AG04450 (cell line): ENCODE measurements at regions of chr5 and their contacts with region 1.

Region 1: DNA sequence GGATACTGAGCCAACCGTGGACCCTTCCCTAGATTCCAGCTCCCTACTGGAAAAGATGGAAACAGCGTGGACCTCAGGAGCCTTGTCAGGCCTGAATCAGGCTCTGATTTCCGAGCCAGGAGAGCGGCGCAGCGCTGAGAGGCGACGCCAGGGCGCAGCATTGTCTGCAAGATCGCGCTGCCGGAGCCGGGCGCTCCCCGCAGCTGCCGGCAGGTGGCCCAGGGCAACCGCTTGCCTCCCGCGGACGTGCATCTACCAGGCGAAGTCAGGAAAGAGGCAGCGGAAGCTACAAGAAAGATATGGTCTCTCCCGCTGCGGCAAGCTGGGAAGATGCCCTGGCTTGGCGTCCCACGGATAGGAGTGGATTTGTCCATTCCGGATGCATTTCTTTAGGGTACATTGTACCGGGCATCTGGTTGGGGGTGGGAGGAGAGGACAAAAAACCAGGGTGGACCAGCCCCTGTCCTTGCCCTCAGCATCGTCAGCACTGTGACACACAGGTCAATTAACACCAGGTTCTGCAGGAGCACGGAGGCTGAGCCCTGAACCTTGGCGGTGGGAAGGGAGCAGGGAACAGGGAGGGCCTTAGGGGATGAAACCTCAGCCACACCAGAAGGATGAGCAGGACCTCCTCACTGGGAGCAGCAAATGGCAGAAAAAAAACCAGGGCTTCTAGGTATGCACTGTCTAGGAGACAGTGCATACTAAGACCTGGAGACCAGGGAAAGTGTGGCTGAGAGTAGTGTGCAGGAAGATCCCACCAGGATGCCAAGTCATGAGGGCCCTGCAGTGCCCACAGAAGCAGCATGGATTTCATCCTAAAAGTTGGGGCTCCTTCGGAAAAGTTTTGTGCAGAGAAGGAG is 55.9 kb downstream of the SFXN1 start:
- DNase-seq: peak; percentile 64
- H3K4me3 ChIP-seq: peak overlapping the region; percentile 3; the same call in 1 of the 2 replicates
- H3K27ac ChIP-seq: no peak overlapping the region
- H3K27me3 ChIP-seq: peaks cover 3% of the 10 kb centered on the region
- CTCF ChIP-seq: peak; percentile 99

Region 2: DNA sequence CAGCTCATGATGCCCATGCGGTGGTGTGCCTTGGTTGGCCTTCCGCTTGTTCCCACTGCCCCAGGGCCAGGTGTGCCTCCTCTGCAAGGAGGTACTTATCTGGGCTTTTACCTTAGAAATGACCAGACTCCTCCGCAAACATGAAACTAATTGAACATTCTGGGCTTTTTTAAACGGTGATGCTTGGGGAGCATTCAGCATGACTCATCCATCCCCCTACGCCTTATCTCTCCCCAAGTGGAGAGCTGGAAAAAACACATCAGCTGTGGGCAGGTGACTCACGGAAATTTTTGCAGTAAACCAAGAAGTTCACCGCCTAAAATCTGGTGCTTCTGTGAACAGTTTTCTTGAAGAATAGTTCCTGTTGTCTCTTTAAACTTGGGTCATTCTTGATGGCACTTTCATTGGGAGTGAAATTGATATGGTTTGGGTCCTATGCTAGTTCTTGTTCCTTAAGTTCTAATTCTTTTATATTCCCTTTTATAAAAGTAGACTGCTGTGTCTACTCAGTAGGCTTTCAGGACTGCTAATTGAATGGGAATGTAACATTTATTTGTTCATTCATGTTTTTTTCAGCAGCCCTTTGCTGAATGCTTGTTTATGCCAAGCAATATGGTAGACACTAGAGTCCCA is 16.4 kb before region 1 on chr5:
- CTCF ChIA-PET with region 1: interaction called, 19 read pairs
- POLR2A ChIA-PET with region 1: no interaction called
- DNase-seq: peak; percentile 61
- H3K4me3 ChIP-seq: no peak overlapping the region
- H3K27ac ChIP-seq: peak overlapping the region; percentile 78
- H3K27me3 ChIP-seq: no peaks in the 10 kb centered on the region
- CTCF ChIP-seq: no peak

Region 3: DNA sequence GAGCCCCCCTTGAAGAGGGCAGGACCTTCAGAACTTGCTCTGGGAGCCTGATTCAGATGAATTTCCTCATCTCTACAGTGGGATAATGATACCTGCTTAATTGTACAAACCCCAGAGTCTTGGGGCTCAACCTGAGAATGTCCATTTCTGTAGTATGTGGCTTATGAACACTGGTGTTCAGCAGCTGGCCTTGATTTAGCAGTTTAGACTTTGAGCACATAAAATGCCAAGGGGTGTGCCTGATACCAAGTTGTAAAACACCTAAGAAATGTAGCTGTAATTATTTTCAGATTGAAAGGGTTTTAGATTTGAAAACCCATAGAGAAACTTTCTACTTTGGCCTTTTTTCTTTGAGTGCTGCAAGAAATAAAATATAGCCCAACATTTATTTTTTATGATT is 11.0 kb before region 1 on chr5:
- CTCF ChIA-PET with region 1: interaction called, 28 read pairs
- POLR2A ChIA-PET with region 1: no interaction called
- DNase-seq: no peak
- H3K4me3 ChIP-seq: no peak overlapping the region
- H3K27ac ChIP-seq: no peak overlapping the region
- H3K27me3 ChIP-seq: no peaks in the 10 kb centered on the region
- CTCF ChIP-seq: no peak

Region 4: DNA sequence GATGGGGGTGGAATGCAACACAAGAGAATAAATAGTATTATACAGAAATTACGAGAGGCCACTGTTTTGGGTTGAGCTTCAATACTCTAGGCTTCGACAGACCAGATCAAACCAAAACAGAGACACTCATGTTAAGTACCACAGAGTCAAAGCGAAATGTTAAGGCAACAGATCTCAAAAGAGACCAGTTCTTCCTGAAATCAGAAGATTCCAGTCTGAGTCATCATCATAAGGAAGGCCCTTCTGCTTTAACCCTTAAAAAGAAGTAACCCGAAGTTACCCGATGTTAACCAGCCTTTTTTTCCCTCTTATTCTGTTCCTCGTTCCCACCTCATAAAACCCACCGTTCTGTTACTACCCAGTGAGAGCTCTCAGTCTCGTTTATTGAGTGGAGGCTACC is 20.0 kb after region 1 on chr5:
- CTCF ChIA-PET with region 1: interaction called, 10 read pairs
- POLR2A ChIA-PET with region 1: no interaction called
- DNase-seq: no peak
- H3K4me3 ChIP-seq: no peak overlapping the region
- H3K27ac ChIP-seq: no peak overlapping the region
- H3K27me3 ChIP-seq: no peaks in the 10 kb centered on the region
- CTCF ChIP-seq: no peak

Region 5: DNA sequence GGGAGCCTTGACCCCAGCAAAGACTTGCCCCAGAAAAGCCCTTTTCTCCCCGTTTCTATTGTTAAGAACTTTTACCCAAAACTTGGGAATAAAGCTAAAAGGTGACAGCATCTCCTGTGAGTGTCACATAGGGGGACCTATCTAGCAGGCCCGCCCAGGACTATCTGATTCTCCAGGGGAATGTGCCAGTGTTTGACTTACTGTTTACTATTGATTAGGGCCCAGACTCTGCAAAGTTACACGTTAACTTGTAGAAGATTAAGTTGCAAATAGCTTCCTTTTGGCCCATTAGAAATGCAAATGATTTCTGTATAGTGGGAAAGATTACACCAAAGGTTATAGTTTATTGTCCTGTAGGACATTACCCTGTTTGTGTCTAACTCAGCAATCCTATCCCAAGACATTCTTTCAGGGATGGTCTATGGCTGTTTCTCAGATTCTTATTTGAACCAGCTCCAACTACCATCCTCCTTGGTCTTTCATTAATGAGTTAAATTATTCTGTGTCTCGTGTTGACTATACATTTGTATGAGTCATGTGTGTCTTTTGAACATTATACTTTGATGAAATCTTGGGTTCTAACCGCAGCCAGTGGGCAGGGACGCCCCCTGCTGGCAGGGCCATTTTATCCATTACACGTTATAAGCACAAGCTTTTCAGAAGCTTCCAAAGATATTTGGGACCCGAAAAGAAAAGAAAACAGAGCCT is 184.3 kb after region 1 on chr5:
- CTCF ChIA-PET with region 1: interaction called, 28 read pairs
- POLR2A ChIA-PET with region 1: no interaction called
- DNase-seq: no peak
- H3K4me3 ChIP-seq: no peak overlapping the region
- H3K27ac ChIP-seq: no peak overlapping the region
- H3K27me3 ChIP-seq: no peaks in the 10 kb centered on the region
- CTCF ChIP-seq: peak; percentile 34

Region 6: GRCh38 chr5:175729829-175730277 is 195.6 kb after region 1 on chr5:
- CTCF ChIA-PET with region 1: interaction called, 36 read pairs
- POLR2A ChIA-PET with region 1: no interaction called
- DNase-seq: peak; percentile 81
- H3K4me3 ChIP-seq: no peak overlapping the region
- H3K27ac ChIP-seq: no peak overlapping the region
- H3K27me3 ChIP-seq: peaks cover 10% of the 10 kb centered on the region
- CTCF ChIP-seq: peak; percentile 96